Endothelial cell of umbilical vein (primary cell): ENCODE measurements at regions of chr7 and their contacts with region 1.

Region 1: DNA sequence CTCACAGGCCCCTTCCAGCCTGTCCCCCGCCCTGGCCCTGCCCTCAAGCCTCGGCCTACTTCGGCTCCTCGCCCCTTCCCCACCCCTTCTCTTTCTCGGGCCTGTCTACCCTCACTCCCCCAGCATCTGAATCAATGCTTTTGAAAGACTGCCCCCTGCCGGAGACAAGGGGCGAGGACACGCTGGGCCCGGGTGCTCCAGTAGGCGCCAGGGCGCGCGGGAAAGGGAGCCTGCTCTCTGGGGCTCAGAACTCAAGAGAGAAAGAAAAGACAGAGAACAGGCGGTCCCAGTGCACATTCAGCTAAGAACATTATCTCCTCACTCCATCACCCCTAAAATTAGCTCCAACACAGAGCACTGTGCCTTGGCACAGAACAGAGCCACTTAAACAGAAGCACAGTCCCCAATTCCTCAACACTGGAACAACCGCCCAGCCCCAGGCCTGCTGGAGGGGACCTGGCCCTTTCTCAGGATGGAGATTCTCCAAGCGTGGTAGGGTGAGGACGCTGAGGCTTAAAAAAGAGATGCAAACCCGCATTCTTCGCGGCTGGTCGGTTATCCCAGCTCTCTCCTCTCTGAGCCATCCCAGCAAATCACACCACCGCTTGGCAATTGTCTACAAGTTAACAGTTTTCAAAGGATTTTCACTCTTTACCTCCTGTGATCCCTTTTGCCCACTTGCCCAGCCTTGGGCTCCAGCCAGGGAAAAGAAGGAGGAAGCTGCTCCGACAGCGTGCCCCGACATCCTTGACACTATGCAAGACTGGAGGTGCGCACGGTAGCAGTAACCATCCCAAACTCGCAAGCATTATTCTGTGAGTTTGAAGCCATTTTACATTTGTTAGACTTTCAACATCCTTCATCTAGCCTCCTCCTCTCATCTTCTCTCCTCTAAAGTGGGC is 2.1 kb downstream of the GIGYF1 start:
- DNase-seq: peak; percentile 65
- H3K4me3 ChIP-seq: peak overlapping the region in 1 of 3 experiments; percentile 65
- H3K27ac ChIP-seq: no peak overlapping the region
- H3K4me1 ChIP-seq: peaks cover 16% of the 10 kb centered on the region
- H3K27me3 ChIP-seq: no peaks in the 10 kb centered on the region
- CTCF ChIP-seq: peak; percentile 86 to 89
- POLR2A ChIP-seq: no peak

Region 2: DNA sequence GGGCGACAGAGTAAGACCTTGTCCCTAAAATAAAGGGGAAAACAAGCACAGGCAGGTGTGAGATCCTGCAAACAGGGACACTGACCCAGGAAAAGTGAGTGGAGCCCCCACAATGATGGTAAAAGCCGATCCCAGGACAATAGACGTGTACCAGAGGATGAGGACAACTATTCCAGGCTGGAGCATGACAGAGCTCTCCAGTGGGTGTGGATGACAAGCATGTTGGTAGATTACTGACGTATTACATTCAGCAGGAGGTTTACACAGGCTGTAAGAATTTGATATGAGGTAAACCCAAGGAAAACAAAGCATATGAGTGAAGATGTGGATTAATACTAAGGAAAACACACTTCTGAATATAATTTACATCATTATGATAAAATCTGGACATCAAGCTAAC is 1520.2 kb before region 1 on chr7:
- CTCF ChIA-PET with region 1: no interaction called
- POLR2A ChIA-PET with region 1: no interaction called
- dilution Hi-C with region 1: no loop called
- intact Hi-C with region 1: no loop called
- DNase-seq: no peak
- H3K4me3 ChIP-seq: no peak overlapping the region
- H3K27ac ChIP-seq: no peak overlapping the region
- H3K4me1 ChIP-seq: no peaks in the 10 kb centered on the region
- H3K27me3 ChIP-seq: peaks cover 3 to 12% of the 10 kb centered on the region in 2 experiments
- CTCF ChIP-seq: no peak
- POLR2A ChIP-seq: no peak

Region 3: DNA sequence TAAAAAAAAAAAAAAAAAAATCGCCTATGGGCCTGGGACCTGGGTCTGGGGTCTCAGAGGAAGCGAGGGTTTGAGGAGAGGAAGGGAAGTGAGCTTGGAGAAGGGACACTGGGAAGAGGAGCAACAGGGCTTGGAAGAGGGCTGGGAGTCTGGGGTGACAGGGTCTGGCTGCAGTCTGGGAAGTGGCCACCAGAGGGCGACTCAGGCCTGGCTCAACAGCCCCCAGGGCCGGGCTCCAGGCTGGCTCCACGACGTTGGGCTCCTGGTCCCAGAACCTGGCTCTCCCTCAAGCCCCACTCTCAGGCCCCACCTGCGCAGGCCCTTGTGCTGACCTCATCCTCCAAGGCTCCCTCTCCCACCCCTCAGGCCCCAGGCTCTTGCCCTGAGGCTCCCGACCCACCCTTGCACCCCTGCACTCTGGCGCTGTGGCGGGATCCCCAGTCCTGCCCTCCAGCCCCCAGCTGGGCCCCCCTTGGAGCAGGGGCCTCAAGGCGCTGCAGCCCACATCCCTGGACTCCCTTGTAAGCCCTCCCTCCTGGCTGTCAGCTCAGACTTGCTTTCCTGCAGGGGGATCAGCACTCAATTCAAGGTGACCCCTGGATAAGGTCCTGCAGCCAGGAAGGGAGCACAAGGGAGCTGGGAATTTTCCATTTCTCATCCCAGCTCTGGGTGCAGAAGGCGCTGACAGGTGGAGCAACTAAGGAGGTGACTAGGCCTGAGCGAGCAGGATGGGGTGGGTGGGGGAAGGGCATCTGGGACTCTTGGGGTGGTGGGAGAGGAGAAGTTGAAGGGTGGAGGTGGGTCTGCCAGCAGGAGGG is 222.5 kb before region 1 on chr7:
- CTCF ChIA-PET with region 1: interaction called, 10 read pairs
- POLR2A ChIA-PET with region 1: no interaction called
- dilution Hi-C with region 1: no loop called
- intact Hi-C with region 1: loop called (anchors 5 kb)
- DNase-seq: peak; percentile 66
- H3K4me3 ChIP-seq: no peak overlapping the region
- H3K27ac ChIP-seq: no peak overlapping the region
- H3K4me1 ChIP-seq: peaks cover 8% of the 10 kb centered on the region
- H3K27me3 ChIP-seq: no peaks in the 10 kb centered on the region
- CTCF ChIP-seq: peak; percentile 89 to 100
- POLR2A ChIP-seq: peak; percentile 52

Region 4: DNA sequence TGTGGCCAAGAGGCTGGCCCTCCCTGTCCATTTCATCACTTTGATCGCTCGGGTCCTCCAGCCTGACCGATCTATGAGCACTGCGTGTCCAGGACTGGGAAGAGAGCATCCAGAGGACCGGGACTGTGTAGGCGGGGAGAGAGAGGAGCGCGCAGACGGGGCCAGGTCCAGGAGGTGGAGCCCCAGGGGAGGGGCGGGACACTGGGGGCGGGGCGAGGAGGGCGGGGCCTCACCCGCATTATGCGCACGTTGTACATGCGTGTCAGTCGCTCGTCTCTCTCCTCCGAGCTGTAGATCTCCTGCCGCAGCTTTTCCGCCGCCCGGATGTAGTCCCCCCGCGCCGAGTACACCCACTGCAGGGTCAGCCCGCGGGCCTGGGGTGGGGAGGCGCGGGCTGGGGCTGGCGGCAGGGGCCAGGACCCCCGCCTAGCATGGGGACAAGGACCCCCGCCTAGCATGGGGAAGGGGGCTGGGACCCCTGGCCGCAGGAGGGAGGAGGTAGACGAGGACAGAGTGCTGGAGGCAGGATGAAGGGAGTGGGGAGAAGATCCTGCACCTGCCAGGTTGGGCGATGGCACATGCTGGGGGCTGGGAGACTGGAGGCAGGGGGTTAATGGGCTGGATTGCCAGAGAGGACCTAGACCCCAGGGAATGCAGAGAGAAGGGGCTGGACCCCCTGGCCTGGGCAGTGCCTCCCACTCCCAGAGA is 65.2 kb before region 1 on chr7:
- CTCF ChIA-PET with region 1: no interaction called
- POLR2A ChIA-PET with region 1: no interaction called
- dilution Hi-C with region 1: no loop called
- intact Hi-C with region 1: loop called (anchors 5 kb)
- DNase-seq: peak; percentile 83
- H3K4me3 ChIP-seq: peak overlapping the region in 1 of 3 experiments; percentile 16
- H3K27ac ChIP-seq: no peak overlapping the region
- H3K4me1 ChIP-seq: peaks cover 3% of the 10 kb centered on the region
- H3K27me3 ChIP-seq: no peaks in the 10 kb centered on the region
- CTCF ChIP-seq: no peak
- POLR2A ChIP-seq: no peak

Region 5: GRCh38 chr7:100632951-100633717 is 58.8 kb before region 1 on chr7:
- CTCF ChIA-PET with region 1: interaction called, 10 read pairs
- POLR2A ChIA-PET with region 1: no interaction called
- dilution Hi-C with region 1: no loop called
- intact Hi-C with region 1: loop called (anchors 5 kb)
- DNase-seq: no peak
- H3K4me3 ChIP-seq: peak overlapping the region; percentile 16 to 34 (median 27)
- H3K27ac ChIP-seq: no peak overlapping the region
- H3K4me1 ChIP-seq: peaks cover 5% of the 10 kb centered on the region
- H3K27me3 ChIP-seq: peaks cover 2 to 7% of the 10 kb centered on the region in 2 experiments
- CTCF ChIP-seq: peak; percentile 35 to 56
- POLR2A ChIP-seq: no peak

Region 6: GRCh38 chr7:100680167-100680575 is 11.8 kb before region 1 on chr7:
- CTCF ChIA-PET with region 1: interaction called, 60 read pairs
- POLR2A ChIA-PET with region 1: no interaction called
- dilution Hi-C with region 1: no loop called
- intact Hi-C with region 1: no loop called
- DNase-seq: no peak
- H3K4me3 ChIP-seq: no peak overlapping the region
- H3K27ac ChIP-seq: no peak overlapping the region
- H3K4me1 ChIP-seq: peaks cover 4% of the 10 kb centered on the region
- H3K27me3 ChIP-seq: no peaks in the 10 kb centered on the region
- CTCF ChIP-seq: no peak
- POLR2A ChIP-seq: no peak